Common myeloid progenitor, CD34-positive (primary cell): ENCODE measurements at regions of chr11 and their contacts with region 1.

Region 1: GRCh38 chr11:57499413-57499982 is 16.0 kb downstream of the SLC43A1 start:
- DNase-seq: peak; percentile 64 to 72 (median 68)
- H3K4me3 ChIP-seq: peak overlapping the region in 4 of 7 experiments; percentile 29 to 58 (median 54)
- H3K27ac ChIP-seq: no peak overlapping the region
- H3K4me1 ChIP-seq: peaks cover 0 to 11% (median 5%) of the 10 kb centered on the region in 4 experiments
- H3K27me3 ChIP-seq: no peaks in the 10 kb centered on the region

Region 2: DNA sequence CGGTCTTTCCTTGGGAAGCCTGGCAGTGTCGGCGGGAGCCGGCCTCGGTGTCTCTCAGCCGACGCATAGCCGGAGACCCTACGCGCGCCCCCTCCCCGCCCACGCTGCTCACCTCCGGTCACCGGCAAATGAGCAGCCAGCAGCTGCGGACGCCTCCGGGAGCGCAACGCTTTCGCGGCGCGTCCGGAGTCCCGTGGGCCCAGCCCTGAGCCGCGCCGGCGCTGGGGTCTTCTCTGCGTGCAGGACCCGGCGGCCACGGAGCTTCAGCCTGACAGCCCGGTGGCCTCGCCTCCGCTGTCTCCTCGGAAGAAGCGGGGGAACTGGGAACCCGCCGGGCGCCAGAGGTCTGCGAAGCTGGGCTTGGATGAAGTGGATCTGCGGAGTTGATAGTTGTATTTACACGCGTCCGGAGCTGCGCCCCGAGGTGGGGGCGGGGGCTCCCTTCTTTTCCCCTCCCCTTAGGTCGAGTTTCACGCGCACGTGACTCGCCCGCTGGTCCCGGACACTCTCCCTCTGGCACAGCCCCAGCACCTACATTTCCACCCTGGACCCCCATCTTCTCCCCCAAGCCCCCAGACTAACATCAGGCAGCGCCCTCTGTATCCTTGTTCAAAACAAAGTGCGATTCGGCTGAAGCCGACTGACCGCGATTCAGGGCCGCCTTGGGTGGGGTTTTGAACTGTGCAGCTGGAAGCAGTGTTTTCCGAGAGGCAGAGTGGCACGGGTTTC is 16.0 kb after region 1 on chr11 and contains the start of gene SLC43A1:
- CTCF ChIA-PET with region 1: interaction called, 158 read pairs
- POLR2A ChIA-PET with region 1: interaction called, 3 read pairs
- DNase-seq: peak; percentile 31 to 44 (median 38)
- H3K4me3 ChIP-seq: peak within 1 kb of the TSS; percentile 75 to 95 (median 89)
- H3K27ac ChIP-seq: peak within 1 kb of the TSS in 1 of 2 experiments; percentile 49
- H3K4me1 ChIP-seq: peaks cover 4 to 32% (median 26%) of the 10 kb centered on the region in 4 experiments
- H3K27me3 ChIP-seq: no peaks in the 10 kb centered on the region